PC-3 (cell line): ENCODE measurements at regions of chr22 and their contacts with region 1.

Region 1: DNA sequence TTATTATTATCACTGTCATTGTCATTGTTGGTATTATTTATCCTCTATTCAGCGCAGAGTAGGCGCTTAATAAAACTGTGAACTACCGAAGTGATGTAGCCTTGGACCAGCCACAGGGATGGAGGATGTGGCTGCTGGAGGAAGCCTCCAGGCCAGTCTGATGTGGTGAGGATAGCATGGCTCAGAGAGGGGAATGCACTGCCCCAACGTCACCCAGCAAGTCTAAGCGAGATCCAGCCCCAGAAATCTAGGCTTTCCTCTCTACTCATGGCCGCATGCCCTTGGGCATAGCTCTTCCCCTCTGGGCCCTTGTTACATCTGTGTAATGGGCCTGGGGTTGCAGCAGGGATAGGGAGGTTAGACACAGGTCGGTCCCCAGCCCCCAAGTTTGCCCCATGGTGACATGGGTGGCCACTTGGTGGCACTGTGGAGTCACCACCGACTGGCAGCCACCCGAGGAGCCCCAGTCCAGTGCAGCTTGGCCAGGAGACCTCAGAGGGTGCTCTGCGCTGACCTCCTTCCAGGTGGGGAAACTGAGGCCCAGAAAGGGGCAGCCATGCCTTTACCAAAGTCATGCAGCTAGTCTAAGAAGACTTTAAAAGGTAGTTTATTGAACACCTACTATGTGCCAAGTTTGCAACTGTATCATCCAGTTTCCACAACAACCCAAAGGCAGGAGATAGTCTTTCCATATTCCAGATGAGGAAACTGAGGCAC is 395.7 kb downstream of the MN1 start:
- DNase-seq: peak; percentile 68
- ATAC-seq: peak; percentile 80
- H3K4me3 ChIP-seq: no peak overlapping the region
- H3K27ac ChIP-seq: no peak overlapping the region
- H3K4me1 ChIP-seq: no peaks in the 10 kb centered on the region
- H3K27me3 ChIP-seq: no peaks in the 10 kb centered on the region
- CTCF ChIP-seq: peak; percentile 82

Region 2: GRCh38 chr22:27489176-27489675 is 83.4 kb after region 1 on chr22:
- CTCF ChIA-PET with region 1: no interaction called
- POLR2A ChIA-PET with region 1: no interaction called
- intact Hi-C with region 1: loop called (anchors 5 kb)
- DNase-seq: peak; percentile 43
- ATAC-seq: peak; percentile 48
- H3K4me3 ChIP-seq: no peak overlapping the region
- H3K27ac ChIP-seq: peak overlapping the region; percentile 47
- H3K4me1 ChIP-seq: peaks cover 27% of the 10 kb centered on the region
- H3K27me3 ChIP-seq: no peaks in the 10 kb centered on the region
- CTCF ChIP-seq: no peak

Region 3: DNA sequence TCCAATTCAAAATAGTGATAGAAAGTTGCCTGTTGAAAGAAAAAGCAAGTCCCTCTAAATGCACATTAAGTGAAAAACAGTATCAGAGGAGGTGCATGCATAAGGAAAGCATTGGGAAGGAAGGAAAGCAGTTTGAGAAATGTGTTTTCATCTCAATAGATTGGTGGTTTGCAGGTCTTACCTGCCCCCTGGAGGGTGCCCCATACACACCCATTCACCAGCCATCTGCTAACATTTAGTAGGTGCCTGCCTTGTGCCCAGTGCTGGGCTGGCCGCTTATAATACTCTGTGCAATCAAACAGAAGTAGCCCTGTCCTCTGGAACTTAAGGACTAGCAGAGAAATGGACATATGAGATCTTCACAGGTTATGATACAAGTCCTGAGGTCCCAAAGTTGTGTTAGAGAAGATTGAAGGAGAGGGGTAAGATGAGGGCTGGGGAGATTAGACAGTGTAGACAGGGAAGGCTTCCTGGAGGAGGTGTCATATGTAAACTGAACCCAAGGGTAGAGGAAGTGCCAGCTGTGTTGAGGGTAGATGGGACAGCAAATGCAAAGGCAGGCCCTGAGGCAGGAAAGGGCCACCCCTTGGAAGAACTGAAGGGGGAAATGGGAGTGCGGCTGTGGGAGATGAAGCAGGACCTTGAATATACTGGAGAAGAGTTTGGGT is 211.5 kb after region 1 on chr22:
- CTCF ChIA-PET with region 1: no interaction called
- POLR2A ChIA-PET with region 1: no interaction called
- intact Hi-C with region 1: loop called (anchors 2 kb)
- DNase-seq: peak; percentile 19
- ATAC-seq: peak; percentile 29; the same call in 1 of the 2 replicates
- H3K4me3 ChIP-seq: no peak overlapping the region
- H3K27ac ChIP-seq: no peak overlapping the region
- H3K4me1 ChIP-seq: no peaks in the 10 kb centered on the region; the same call in 1 of the 2 replicates
- H3K27me3 ChIP-seq: no peaks in the 10 kb centered on the region
- CTCF ChIP-seq: peak; percentile 45

Region 4: DNA sequence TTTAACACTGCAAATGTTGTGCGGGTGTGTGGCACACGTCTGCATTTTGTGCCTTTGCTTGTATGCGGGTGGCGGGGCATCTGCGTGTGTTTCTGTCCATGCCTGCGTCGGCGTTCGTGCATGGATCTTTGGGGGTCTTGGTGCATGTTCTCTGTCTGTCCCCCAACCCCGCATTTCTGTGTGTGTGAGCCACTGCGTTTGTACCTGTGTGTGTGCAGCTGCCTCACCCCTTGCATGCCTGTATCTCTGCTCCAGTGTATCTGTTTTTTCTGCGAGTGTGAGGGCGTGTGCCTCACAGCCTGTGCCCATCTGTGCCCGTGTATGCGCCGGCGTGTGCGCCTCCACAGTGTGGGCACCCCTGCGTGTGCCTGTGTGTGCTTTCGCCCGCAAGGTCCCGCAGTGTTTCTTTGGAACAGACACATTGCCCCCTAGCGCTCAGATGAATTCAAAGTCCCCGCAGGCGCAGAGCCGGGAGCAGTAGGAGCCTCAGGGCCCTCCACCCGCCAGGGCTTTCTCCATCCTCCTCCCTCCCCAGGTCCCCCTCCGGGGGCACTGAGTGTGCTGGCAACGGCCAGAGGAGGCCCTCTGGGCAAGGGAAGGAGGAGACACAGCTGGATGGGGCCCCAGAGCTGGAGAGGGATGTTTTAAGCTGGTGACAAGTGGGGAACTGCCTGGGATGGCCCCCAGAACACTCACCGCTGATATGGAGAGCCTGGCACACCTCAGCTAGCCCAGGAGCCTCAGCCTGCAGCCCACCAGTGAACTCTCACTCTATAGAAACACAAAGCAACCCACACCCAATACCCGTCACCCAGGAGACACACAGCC is 398.9 kb after region 1 on chr22:
- CTCF ChIA-PET with region 1: no interaction called
- POLR2A ChIA-PET with region 1: no interaction called
- intact Hi-C with region 1: loop called (anchors 2 kb)
- DNase-seq: peak; percentile 66
- ATAC-seq: peak; percentile 81
- H3K4me3 ChIP-seq: no peak overlapping the region
- H3K27ac ChIP-seq: no peak overlapping the region
- H3K4me1 ChIP-seq: peaks cover 9% of the 10 kb centered on the region
- H3K27me3 ChIP-seq: peaks cover 10% of the 10 kb centered on the region
- CTCF ChIP-seq: peak; percentile 74